ENCODE measurements at regions of chr1 and their contacts with region 1.

Region 1: DNA sequence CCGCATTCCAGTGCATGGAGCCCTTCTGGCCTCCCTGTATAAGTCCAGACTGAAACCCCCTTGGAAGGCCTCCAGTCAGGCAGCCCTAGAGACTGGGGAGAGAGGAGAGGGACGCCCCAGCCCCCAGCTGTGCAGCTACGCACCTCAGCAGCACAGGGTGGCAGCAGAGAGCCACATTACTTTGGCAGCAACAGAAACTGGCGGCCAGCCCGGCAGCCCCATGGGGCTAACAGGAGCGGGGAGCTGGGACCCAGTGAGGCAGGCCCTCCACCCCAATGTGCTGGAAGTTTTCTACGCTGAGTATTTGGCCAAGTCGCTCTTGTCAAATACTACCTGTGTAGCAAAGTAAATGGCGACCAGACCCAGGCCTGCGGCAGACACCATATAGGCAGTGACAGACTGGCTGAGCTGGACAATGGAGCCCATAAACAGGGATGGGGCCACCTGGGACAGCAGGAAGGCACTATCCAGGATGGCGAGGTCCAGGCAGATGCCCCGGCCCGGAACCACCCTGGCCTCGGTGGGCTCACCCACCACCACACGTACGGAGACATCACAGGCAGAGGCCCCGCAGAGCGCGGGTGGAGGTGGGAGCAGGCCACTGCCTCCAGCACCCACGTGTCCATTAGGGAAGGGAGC is 21.2 kb downstream of the SLC45A3 start:
- DNase-seq: peak; percentile 79
- H3K4me3 Mint-ChIP-seq: no peak overlapping the region
- H3K27ac Mint-ChIP-seq: no peak overlapping the region
- H3K4me1 Mint-ChIP-seq: peaks cover 4% of the 10 kb centered on the region
- H3K27me3 Mint-ChIP-seq: peaks cover 3% of the 10 kb centered on the region

Region 2: GRCh38 chr1:205591522-205592351 is 67.3 kb before region 1 on chr1:
- CTCF ChIA-PET with region 1: interaction called, 366 read pairs
- POLR2A ChIA-PET with region 1: interaction called, 34 read pairs
- DNase-seq: peak; percentile 89
- H3K4me3 Mint-ChIP-seq: peak overlapping the region; percentile 74
- H3K27ac Mint-ChIP-seq: peak overlapping the region; percentile 64
- H3K4me1 Mint-ChIP-seq: peaks cover 44% of the 10 kb centered on the region
- H3K27me3 Mint-ChIP-seq: no peaks in the 10 kb centered on the region

Region 3: DNA sequence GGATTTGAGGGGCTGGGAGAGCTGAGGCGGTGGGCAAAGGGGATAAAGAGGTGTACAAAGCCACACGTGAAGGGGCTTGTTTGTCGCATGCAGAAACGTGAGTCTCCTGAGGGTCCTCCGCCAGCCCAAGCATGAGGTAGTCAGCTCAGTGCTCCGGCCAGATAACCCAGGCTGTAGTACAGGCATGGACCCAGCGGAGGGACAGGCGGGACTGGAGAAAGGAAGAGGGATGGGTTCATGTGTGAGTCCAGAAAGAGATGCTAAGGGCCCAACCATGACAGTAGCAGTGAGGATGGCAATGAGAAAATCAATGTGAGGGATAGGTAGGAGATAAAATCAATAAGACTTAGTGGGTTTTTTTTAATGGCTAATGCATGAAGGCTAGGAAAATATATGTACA is 13.5 kb before region 1 on chr1:
- CTCF ChIA-PET with region 1: interaction called, 37 read pairs
- POLR2A ChIA-PET with region 1: no interaction called
- DNase-seq: no peak
- H3K4me3 Mint-ChIP-seq: no peak overlapping the region
- H3K27ac Mint-ChIP-seq: no peak overlapping the region
- H3K4me1 Mint-ChIP-seq: no peaks in the 10 kb centered on the region
- H3K27me3 Mint-ChIP-seq: peaks cover 4% of the 10 kb centered on the region

Region 4: GRCh38 chr1:205711104-205712020 is 52.3 kb after region 1 on chr1:
- CTCF ChIA-PET with region 1: interaction called, 158 read pairs
- POLR2A ChIA-PET with region 1: interaction called, 10 read pairs
- DNase-seq: peak; percentile 64
- H3K4me3 Mint-ChIP-seq: no peak overlapping the region
- H3K27ac Mint-ChIP-seq: peak overlapping the region; percentile 1
- H3K4me1 Mint-ChIP-seq: peaks cover 15% of the 10 kb centered on the region
- H3K27me3 Mint-ChIP-seq: no peaks in the 10 kb centered on the region

Region 5: DNA sequence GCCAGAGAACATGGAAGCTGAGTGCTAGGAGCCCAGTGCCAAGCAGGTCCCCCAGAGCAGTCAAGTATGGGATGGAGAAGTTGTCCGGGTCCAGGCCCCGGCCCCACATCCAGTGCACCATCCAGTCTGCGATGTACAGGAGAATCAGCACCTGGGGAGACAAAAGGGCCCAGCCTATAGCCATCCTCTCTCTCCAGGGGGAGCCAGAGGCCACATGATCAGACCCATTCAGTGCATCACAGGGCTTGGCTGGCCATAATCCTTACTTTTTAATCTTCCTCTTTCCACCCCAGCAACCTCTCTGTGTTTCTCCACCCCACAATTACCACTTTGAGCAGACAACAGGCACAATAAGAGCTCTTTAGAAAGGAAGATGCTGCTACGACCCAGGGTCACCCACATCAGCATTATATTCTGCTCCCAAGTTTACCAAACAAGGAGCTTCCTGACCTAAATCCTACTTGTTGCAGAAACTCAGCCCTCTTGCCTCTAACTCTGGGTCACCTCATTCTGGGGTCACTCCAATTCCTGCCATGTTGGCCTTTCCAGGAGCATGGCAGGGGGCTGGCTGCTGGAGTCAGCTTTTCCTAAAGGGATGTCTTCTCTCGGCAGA is 132.6 kb after region 1 on chr1:
- CTCF ChIA-PET with region 1: interaction called, 16 read pairs
- POLR2A ChIA-PET with region 1: no interaction called
- DNase-seq: peak; percentile 67
- H3K4me3 Mint-ChIP-seq: no peak overlapping the region
- H3K27ac Mint-ChIP-seq: no peak overlapping the region
- H3K4me1 Mint-ChIP-seq: peaks cover 5% of the 10 kb centered on the region
- H3K27me3 Mint-ChIP-seq: no peaks in the 10 kb centered on the region

Region 6: DNA sequence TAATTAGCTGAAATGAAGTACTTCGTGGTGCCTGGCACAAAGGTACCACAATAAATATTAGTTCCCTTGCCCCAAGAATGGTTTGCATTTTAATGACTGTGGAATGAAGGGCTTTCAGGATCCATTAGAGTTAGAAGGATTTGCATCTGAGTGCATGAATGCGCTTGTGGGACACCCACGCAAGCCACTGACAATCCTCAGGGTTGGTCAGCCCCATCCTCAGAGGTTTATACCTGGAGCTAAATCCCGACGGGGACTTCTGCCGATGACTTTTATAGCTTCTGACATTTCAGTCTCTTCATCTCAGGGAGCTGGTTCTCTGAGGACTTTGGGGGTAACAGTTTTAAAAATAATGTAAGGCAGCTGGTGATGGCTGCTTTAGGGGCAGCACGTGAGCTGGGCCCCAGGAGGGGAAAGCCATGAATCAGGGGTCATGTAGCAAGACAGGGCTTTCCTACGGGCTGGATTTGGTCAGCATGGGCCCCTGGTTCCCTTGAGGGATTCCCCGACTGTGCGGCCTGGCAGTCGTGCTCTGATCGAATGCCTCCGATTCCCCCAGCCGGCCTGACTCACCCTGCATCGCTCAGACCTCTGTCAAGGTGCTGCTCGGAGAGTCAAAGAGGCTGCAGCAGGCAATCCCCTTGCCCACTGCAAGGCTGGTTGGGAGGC is 1134.0 kb after region 1 on chr1:
- CTCF ChIA-PET with region 1: no interaction called
- POLR2A ChIA-PET with region 1: no interaction called
- DNase-seq: no peak
- H3K4me3 Mint-ChIP-seq: no peak overlapping the region
- H3K27ac Mint-ChIP-seq: no peak overlapping the region
- H3K4me1 Mint-ChIP-seq: peaks cover 52% of the 10 kb centered on the region
- H3K27me3 Mint-ChIP-seq: peaks cover 37% of the 10 kb centered on the region

Measured in activated CD4-positive, alpha-beta memory T cell treated with anti-CD3 and anti-CD28 coated beads, Interleukin-2, amount 10 ng/mL, durations not matched to agents 7 days and 5 days (primary cell).